ENCODE measurements at regions of chr10 and their contacts with region 1.

Region 1: GRCh38 chr10:110803830-110804338 is 67.8 kb upstream of the PDCD4 start:
- DNase-seq: peak in 3 of 6 donors; percentile 50 to 67 (median 52)
- ATAC-seq: peak; percentile 72 to 90 (median 83)
- H3K4me3 ChIP-seq: peak overlapping the region in 1 of 4 donors; percentile 5
- H3K27ac ChIP-seq: peak overlapping the region; percentile 22 to 78 (median 58)
- H3K4me1 ChIP-seq: peaks cover 15 to 35% (median 28%) of the 10 kb centered on the region in 3 donors
- H3K27me3 ChIP-seq: no peaks in the 10 kb centered on the region
- CTCF ChIP-seq: peak in 3 of 4 donors; percentile 26 to 47 (median 44)

Region 2: GRCh38 chr10:110708776-110709443 is 95.0 kb before region 1 on chr10:
- intact Hi-C with region 1: no loop called
- DNase-seq: no peak
- ATAC-seq: no peak
- H3K4me3 ChIP-seq: no peak overlapping the region
- H3K27ac ChIP-seq: no peak overlapping the region
- H3K4me1 ChIP-seq: no peaks in the 10 kb centered on the region
- H3K27me3 ChIP-seq: no peaks in the 10 kb centered on the region
- CTCF ChIP-seq: no peak

Region 3: GRCh38 chr10:110864662-110865140 is 60.8 kb after region 1 on chr10:
- intact Hi-C with region 1: loop called in 1 of 3 experiments (anchors 10 kb)
- DNase-seq: peak in 2 of 6 donors; percentile 24 to 31
- ATAC-seq: peak in 2 of 4 donors; percentile 42 to 43
- H3K4me3 ChIP-seq: no peak overlapping the region
- H3K27ac ChIP-seq: peak overlapping the region in 3 of 4 donors; percentile 1 to 78 (median 78)
- H3K4me1 ChIP-seq: peaks cover 27 to 67% (median 54%) of the 10 kb centered on the region in 3 donors
- H3K27me3 ChIP-seq: no peaks in the 10 kb centered on the region
- CTCF ChIP-seq: no peak

Measured in pancreas (tissue), 10 donors.